Activated CD4-positive, alpha-beta T cell treated with anti-CD3 and anti-CD28 coated beads, Interleukin-2, amount 10 ng/mL, durations not matched to agents 24 days and 14 days (primary cell): ENCODE measurements at regions of chr19 and their contacts with region 1.

Region 1: GRCh38 chr19:55117636-55118391 is at the start of gene PPP1R12C:
- DNase-seq: peak; percentile 99
- H3K4me3 Mint-ChIP-seq: peak within 1 kb of the TSS; percentile 94
- H3K27ac Mint-ChIP-seq: peak within 1 kb of the TSS; percentile 91
- H3K4me1 Mint-ChIP-seq: peaks cover 28% of the 10 kb centered on the region
- H3K27me3 Mint-ChIP-seq: peaks cover 10% of the 10 kb centered on the region
- total RNA-seq, gene PPP1R12C: 103 and 104 TPM in 2 replicates

Region 2: DNA sequence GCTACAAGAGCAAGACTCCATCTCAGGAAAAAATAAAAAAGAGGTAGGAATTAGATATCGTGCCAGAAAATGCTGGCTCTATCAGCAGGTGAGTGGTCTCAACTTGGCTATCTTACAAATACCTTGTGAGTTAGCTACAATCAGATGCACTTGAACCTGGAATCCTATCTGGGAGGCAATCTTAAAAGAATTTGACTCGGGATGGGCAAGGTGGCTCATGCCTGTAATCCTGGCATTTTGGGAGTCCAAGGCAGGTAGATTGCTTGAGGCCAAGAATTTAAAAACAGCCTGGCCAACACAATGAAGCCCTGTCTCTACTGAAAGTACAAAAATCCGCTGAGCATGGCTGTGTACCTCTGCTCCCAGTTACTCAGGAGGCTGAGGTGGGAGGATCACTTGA is 122.3 kb before region 1 on chr19:
- intact Hi-C with region 1: no loop called
- DNase-seq: no peak
- H3K4me3 Mint-ChIP-seq: no peak overlapping the region
- H3K27ac Mint-ChIP-seq: no peak overlapping the region
- H3K4me1 Mint-ChIP-seq: no peaks in the 10 kb centered on the region
- H3K27me3 Mint-ChIP-seq: no peaks in the 10 kb centered on the region

Region 3: DNA sequence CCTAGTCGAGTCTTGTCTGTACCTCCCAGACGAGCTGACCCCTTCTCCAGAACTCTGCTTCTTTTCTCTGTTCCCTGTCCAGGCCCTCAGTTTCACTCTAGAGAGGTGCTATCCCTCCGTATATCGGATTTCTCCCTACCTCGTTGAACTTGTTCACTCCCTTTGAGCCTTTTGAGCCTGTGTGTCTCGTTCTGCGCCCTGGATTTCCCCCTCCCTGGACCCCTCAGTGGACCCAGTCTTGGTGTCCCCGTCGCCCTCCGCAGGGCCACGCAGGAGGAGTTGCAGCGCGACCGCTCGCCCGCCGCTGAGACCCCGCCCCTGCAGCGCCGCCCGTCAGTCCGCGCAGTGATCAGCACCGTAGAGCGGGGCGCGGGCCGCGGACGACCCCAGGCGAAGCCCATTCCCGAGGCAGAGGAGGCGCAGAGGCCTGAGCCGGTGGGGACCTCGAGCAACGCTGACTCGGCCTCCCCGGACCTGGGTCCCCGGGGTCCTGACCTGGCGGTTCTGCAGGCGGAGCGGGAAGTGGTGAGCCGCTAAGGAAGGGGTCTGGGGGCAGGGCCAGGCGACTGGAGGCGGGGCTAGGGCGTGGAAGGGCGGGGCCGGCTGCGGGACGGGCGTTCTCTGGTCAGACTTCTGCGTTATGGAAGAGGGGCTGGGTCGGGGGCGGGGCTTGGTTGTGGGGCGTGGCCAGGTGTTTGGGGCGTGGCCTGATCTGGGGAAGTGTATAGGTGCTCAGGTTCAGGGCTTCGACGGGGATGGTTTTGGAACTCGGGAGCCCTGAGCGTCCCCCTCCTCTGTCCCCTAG is 36.6 kb before region 1 on chr19:
- intact Hi-C with region 1: loop called (anchors 2 kb)
- DNase-seq: peak; percentile 98
- H3K4me3 Mint-ChIP-seq: peak overlapping the region; percentile 85
- H3K27ac Mint-ChIP-seq: peak overlapping the region; percentile 89
- H3K4me1 Mint-ChIP-seq: peaks cover 17% of the 10 kb centered on the region
- H3K27me3 Mint-ChIP-seq: peaks cover 37% of the 10 kb centered on the region

Region 4: DNA sequence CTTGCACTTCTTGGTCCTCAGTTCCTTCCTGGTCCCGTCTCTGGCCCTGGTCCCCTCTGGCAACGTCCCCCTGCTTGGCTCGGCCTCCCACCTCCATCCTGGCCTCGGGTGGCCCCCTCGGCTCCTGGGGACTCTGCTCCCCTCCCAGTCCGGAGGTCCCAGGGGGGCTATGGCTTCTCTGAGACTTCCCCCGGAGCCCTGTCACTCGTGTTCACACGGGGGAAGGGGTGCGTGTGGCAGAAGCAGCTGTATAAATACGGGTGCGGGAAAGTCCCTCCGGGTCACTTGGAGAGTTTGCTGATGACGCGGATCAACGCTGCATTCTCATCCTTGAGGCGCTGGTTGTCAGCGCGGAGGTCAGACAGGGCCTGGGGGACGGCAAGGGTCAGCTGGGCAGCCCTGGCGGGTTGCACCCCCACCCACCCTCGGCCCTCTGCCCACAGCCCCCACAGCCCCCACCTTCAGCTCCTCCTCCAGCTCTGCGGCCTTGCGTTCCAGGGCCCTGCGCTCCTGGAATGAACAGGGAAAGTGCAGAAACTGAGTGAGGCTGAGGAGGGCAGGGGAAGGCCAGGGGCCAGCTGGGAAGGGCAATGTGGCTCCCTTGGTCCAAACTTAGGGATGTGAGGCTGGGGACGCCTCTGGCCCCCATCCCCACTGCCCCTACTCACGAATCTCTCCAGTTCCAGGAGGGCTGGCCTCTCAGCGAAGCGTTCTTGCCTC is 26.5 kb before region 1 on chr19:
- intact Hi-C with region 1: no loop called
- DNase-seq: no peak
- H3K4me3 Mint-ChIP-seq: no peak overlapping the region
- H3K27ac Mint-ChIP-seq: no peak overlapping the region
- H3K4me1 Mint-ChIP-seq: peaks cover 20% of the 10 kb centered on the region
- H3K27me3 Mint-ChIP-seq: peaks cover 18% of the 10 kb centered on the region

Region 5: DNA sequence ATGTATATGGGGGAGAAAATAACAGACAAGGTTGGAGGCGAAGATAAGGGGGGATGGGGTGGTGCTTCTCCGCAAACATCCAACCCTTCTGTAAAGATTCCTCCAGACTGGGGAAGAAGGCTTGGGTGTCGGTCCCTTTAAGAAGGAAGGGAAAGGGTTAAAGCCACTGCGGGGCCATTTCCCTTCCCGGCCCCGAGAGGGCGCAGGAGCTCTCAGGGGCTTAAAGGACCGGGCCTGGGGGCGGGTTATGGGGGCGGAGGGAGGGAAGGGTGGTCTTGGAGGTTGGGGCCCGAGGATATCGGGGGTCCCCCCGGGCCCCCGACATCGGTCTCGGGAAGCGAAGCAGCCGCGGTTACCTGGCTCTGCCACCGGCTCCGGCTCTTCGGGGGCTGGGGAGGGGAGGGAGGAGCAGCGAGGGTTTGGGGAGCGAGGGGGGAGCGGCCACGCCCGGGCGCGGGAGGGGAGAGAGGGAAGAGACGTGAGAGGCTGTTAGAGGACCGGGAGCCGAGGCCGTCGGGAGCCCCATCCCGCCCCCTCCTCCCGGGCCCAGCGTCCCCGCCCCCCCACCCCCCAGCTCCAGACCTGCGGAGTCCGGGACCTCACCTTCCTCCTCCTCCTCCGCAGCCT is 28.4 kb after region 1 on chr19:
- intact Hi-C with region 1: no loop called
- DNase-seq: peak; percentile 79
- H3K4me3 Mint-ChIP-seq: peak overlapping the region; percentile 30
- H3K27ac Mint-ChIP-seq: no peak overlapping the region
- H3K4me1 Mint-ChIP-seq: peaks cover 10% of the 10 kb centered on the region
- H3K27me3 Mint-ChIP-seq: peaks cover 42% of the 10 kb centered on the region

Region 6: GRCh38 chr19:55166530-55167268 is 48.9 kb after region 1 on chr19 and contains the start of gene DNAAF3:
- intact Hi-C with region 1: loop called (anchors 1 kb)
- DNase-seq: peak; percentile 93
- H3K4me3 Mint-ChIP-seq: peak within 1 kb of the TSS; percentile 84
- H3K27ac Mint-ChIP-seq: peak within 1 kb of the TSS; percentile 13
- H3K4me1 Mint-ChIP-seq: peaks cover 11% of the 10 kb centered on the region
- H3K27me3 Mint-ChIP-seq: peaks cover 55% of the 10 kb centered on the region
- total RNA-seq, gene DNAAF3: not detected in 2 replicates

Region 7: DNA sequence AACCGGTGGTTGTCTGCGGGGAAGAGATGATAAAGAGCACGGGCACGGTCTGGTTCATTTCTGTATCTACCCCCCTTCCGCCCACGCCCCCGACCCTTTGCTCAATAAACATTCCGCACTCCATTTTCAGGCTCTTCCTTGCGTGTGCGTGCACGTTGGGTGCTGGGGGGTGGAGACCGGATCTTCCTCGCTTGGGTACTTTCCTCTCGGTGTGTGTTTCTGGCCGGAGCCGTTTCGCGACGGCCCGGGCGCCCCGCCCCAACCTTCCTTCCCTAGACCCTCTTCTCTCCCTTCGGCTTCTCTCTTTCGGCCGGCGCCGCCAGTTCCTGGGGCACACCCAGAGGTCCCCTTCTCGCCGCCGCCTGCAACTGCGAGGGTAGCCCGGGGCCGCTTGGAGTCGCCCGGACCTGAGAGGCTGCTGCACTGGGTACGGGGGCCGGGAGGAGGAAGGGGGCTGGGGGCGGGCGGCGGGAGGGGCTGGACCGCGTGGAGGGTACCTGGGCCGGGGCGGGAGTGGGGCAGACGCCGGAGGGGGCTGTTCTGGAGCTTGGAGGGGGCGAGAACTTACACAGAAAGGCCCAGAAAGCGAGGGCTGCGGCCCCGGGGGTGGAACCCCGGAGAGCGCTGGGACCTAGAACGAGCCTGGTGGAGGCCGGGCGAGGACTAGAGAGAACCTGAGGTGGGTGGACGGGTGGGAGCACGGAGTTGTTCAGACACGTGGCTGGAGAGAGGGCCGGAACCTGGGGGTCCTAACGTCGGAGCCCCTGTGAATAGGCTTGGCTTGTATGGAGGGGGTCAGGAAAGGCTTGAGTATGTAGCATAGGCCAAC is 525.7 kb after region 1 on chr19 and contains the start of gene ZNF581:
- intact Hi-C with region 1: loop called (anchors 5 kb)
- DNase-seq: peak; percentile 95
- H3K4me3 Mint-ChIP-seq: peak within 1 kb of the TSS; percentile 90
- H3K27ac Mint-ChIP-seq: peak within 1 kb of the TSS; percentile 98
- H3K4me1 Mint-ChIP-seq: peaks cover 27% of the 10 kb centered on the region
- H3K27me3 Mint-ChIP-seq: no peaks in the 10 kb centered on the region
- total RNA-seq, gene ZNF581: 32.7 and 33.0 TPM in 2 replicates

Region 8: GRCh38 chr19:56140583-56141416 is 1023.0 kb after region 1 on chr19 and contains the start of gene ZNF444:
- intact Hi-C with region 1: loop called (anchors 2 kb)
- DNase-seq: peak; percentile 100
- H3K4me3 Mint-ChIP-seq: peak within 1 kb of the TSS; percentile 94
- H3K27ac Mint-ChIP-seq: peak within 1 kb of the TSS; percentile 91
- H3K4me1 Mint-ChIP-seq: peaks cover 36% of the 10 kb centered on the region
- H3K27me3 Mint-ChIP-seq: peaks cover 4% of the 10 kb centered on the region
- total RNA-seq, gene ZNF444: 35.5 and 35.7 TPM in 2 replicates